PC-9 (cell line): ENCODE measurements at regions of chr1 and their contacts with region 1.

Region 1: GRCh38 chr1:233721141-233721547 is 107.2 kb downstream of the KCNK1 start:
- DNase-seq: peak; percentile 31 to 78
- H3K4me3 ChIP-seq: no peak overlapping the region
- H3K27ac ChIP-seq: peak overlapping the region; percentile 49
- H3K4me1 ChIP-seq: peaks cover 34% of the 10 kb centered on the region
- H3K27me3 ChIP-seq: no peaks in the 10 kb centered on the region
- CTCF ChIP-seq: no peak

Region 2: GRCh38 chr1:233675893-233676292 is 45.3 kb before region 1 on chr1:
- CTCF ChIA-PET with region 1: no interaction called
- POLR2A ChIA-PET with region 1: no interaction called
- intact Hi-C with region 1: loop called (anchors 5 kb)
- DNase-seq: no peak
- H3K4me3 ChIP-seq: no peak overlapping the region
- H3K27ac ChIP-seq: no peak overlapping the region
- H3K4me1 ChIP-seq: peaks cover 17% of the 10 kb centered on the region; the same call in 1 of the 2 replicates
- H3K27me3 ChIP-seq: no peaks in the 10 kb centered on the region
- CTCF ChIP-seq: no peak